Activated CD4-positive, alpha-beta T cell treated with anti-CD3 and anti-CD28 coated beads, Interleukin-2, amount 10 ng/mL, durations not matched to agents 7 days and 5 days (primary cell): ENCODE measurements at regions of chr9 and their contacts with region 1.

Region 1: GRCh38 chr9:79428422-79428821 is 143.3 kb upstream of the TLE4 start:
- DNase-seq: no peak
- H3K4me3 Mint-ChIP-seq: no peak overlapping the region
- H3K27ac Mint-ChIP-seq: no peak overlapping the region
- H3K4me1 Mint-ChIP-seq: no peaks in the 10 kb centered on the region
- H3K27me3 Mint-ChIP-seq: peaks cover 5% of the 10 kb centered on the region

Region 2: DNA sequence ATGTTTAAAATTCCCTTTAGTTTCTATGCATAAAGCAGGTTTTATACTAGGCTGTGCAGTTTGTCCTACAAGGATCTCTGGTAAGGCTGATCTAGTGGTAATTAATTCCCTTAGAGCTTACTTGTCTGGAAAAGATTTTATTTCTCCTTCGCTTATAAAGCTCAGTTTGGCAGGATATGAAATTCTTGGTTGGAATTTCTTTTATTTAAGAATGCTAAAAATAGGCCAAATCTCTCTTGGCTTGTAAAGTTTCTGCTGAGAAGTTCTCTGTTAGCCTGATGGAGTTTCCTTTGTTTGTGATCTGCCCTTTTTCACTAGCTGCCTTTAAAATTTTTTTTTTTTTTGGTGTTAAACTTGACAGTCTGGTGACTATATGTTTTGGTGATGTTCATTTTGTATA is 93.7 kb before region 1 on chr9:
- CTCF ChIA-PET with region 1: no interaction called
- POLR2A ChIA-PET with region 1: interaction called, 17 read pairs
- DNase-seq: no peak
- H3K4me3 Mint-ChIP-seq: no peak overlapping the region
- H3K27ac Mint-ChIP-seq: no peak overlapping the region
- H3K4me1 Mint-ChIP-seq: no peaks in the 10 kb centered on the region
- H3K27me3 Mint-ChIP-seq: no peaks in the 10 kb centered on the region

Region 3: DNA sequence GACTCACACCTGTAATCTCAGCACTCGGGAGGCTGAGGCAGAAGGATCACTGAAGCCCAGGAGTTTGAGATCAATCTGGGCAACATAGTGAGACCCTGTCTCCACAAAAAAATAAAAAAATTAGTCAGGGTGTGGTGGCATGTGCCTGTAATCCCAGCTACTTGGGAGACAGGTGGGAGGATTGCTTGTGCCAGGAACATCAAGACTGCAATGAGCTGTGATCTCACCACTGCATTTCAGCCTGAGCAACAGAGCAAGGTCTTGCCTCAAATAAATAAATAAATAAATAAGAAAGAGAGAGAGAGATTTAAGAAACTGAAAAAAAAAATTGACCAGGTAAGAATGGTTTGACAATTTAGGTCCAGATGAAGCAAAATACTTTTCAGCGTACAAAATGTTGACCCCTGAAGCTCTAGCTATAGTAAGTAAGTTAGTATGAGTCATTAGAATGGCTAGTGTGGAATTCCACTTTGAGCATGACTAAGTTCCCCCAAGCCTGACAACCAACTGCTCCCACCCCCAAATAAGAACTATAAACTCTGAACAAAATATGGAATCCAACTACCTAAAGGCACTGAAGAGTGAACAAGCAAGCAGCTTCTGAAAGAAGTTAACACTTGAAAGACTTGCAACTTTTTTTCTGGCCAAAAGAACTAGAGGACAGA is 74.4 kb before region 1 on chr9:
- CTCF ChIA-PET with region 1: no interaction called
- POLR2A ChIA-PET with region 1: no interaction called
- DNase-seq: no peak
- H3K4me3 Mint-ChIP-seq: no peak overlapping the region
- H3K27ac Mint-ChIP-seq: no peak overlapping the region
- H3K4me1 Mint-ChIP-seq: no peaks in the 10 kb centered on the region
- H3K27me3 Mint-ChIP-seq: no peaks in the 10 kb centered on the region

Region 4: DNA sequence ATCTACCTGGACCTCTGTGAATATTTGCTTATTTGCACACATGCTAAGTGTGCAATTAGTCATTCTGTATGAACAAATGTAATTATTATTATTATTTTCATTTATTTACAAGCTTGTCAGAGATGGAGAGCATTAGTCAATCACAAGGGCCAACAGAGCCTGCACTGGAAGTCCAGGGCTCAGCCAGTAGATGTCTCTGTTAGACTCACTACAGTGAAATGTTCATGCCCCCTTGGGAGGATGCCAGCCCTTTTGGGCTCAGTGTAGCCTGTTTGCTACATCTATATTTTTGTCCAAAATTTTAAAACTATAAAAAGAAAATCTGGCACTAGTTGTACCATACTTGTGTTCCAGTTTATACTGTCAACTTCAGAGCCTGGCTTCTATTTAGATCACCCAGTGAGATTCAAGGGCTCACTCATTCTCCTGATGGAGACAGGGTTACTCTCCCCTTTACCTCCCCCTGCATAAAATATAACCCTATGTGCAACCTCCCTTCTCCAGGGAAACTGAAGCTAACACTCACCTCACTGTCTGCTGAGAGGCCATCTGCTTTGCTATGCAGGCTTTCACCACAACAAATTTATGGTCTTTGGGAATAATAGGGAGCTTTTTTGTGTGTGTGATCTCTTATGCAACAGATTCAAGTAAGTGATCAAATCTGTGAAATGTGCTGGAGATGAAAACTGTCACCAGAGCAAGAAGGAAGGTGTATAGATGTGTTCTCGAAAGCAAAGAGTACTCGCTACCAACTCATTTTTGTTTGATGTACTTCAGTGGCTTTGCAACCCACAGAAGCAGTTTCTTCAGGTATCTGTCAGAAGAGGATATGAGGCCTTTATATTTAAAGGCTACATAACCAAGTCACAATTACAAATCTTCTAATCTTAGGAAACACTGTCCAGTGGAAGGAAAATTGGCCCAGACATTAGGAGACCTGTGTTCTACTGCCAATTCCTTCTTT is 43.4 kb after region 1 on chr9:
- CTCF ChIA-PET with region 1: no interaction called
- POLR2A ChIA-PET with region 1: no interaction called
- DNase-seq: peak; percentile 8
- H3K4me3 Mint-ChIP-seq: no peak overlapping the region
- H3K27ac Mint-ChIP-seq: no peak overlapping the region
- H3K4me1 Mint-ChIP-seq: peaks cover 32% of the 10 kb centered on the region
- H3K27me3 Mint-ChIP-seq: no peaks in the 10 kb centered on the region